ENCODE measurements at regions of chr5 and their contacts with region 1.

Region 1: DNA sequence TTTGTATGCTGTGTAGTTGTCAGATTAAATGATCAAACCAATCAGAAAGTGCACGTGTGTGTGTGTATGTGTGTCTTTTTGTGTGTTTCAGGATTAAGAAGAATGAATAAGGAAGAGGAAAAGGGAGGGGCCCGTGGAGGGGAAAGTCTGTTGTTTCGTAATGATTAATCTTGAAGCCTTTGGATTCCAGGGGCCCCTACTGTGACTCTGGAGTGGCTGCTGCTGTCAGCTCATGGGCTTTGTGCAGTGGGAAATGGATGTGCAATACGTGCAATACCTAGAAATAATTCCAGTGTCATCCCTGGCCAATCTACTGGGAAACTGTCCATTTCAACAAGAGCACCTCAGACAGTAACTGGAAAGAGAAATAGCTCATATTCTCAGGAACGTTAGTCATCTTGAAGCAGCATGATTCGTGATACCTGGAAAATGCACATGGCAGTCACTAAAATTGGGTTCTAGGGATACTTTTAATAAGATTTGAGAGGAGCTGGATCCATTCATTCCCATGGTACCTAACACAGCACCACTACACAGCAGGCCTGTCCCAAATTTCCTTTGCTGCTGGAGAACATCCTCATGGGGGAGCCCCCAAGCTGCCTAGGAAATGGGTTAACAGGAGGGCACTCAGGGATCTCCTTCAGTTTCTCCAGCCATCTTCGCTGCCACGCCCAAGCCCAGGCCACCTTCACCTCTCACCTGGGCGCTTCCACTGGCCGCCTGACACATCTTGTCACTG is 186.3 kb downstream of the NR3C1 start:
- DNase-seq: peak; percentile 53 to 57
- H3K4me3 ChIP-seq: no peak overlapping the region
- H3K4me3 Mint-ChIP-seq: no peak overlapping the region
- H3K27ac Mint-ChIP-seq: peak overlapping the region; percentile 14
- H3K4me1 ChIP-seq: peaks cover 27% of the 10 kb centered on the region
- H3K4me1 Mint-ChIP-seq: peaks cover 19% of the 10 kb centered on the region
- H3K27me3 ChIP-seq: no peaks in the 10 kb centered on the region
- H3K27me3 Mint-ChIP-seq: no peaks in the 10 kb centered on the region
- CTCF ChIP-seq: no peak

Region 2: GRCh38 chr5:142783601-142784341 is 433.5 kb before region 1 on chr5:
- CTCF ChIA-PET with region 1: no interaction called
- POLR2A ChIA-PET with region 1: no interaction called
- intact Hi-C with region 1: no loop called
- DNase-seq: no peak
- H3K4me3 ChIP-seq: no peak overlapping the region
- H3K4me3 Mint-ChIP-seq: no peak overlapping the region
- H3K27ac Mint-ChIP-seq: no peak overlapping the region
- H3K4me1 ChIP-seq: peaks cover 23% of the 10 kb centered on the region
- H3K4me1 Mint-ChIP-seq: peaks cover 40% of the 10 kb centered on the region
- H3K27me3 ChIP-seq: no peaks in the 10 kb centered on the region
- H3K27me3 Mint-ChIP-seq: no peaks in the 10 kb centered on the region
- CTCF ChIP-seq: no peak

Region 3: GRCh38 chr5:143153332-143154119 is 63.7 kb before region 1 on chr5:
- CTCF ChIA-PET with region 1: no interaction called
- POLR2A ChIA-PET with region 1: no interaction called
- intact Hi-C with region 1: no loop called
- DNase-seq: no peak
- H3K4me3 ChIP-seq: no peak overlapping the region
- H3K4me3 Mint-ChIP-seq: no peak overlapping the region
- H3K27ac Mint-ChIP-seq: no peak overlapping the region
- H3K4me1 ChIP-seq: no peaks in the 10 kb centered on the region
- H3K4me1 Mint-ChIP-seq: no peaks in the 10 kb centered on the region
- H3K27me3 ChIP-seq: no peaks in the 10 kb centered on the region
- H3K27me3 Mint-ChIP-seq: no peaks in the 10 kb centered on the region
- CTCF ChIP-seq: no peak

Region 4: GRCh38 chr5:143166661-143167420 is 50.4 kb before region 1 on chr5:
- CTCF ChIA-PET with region 1: no interaction called
- POLR2A ChIA-PET with region 1: no interaction called
- intact Hi-C with region 1: loop called (anchors 2 kb)
- DNase-seq: no peak
- H3K4me3 ChIP-seq: no peak overlapping the region
- H3K4me3 Mint-ChIP-seq: no peak overlapping the region
- H3K27ac Mint-ChIP-seq: peak overlapping the region; percentile 71
- H3K4me1 ChIP-seq: peaks cover 16% of the 10 kb centered on the region
- H3K4me1 Mint-ChIP-seq: peaks cover 18% of the 10 kb centered on the region
- H3K27me3 ChIP-seq: no peaks in the 10 kb centered on the region
- H3K27me3 Mint-ChIP-seq: no peaks in the 10 kb centered on the region
- CTCF ChIP-seq: no peak

Region 5: DNA sequence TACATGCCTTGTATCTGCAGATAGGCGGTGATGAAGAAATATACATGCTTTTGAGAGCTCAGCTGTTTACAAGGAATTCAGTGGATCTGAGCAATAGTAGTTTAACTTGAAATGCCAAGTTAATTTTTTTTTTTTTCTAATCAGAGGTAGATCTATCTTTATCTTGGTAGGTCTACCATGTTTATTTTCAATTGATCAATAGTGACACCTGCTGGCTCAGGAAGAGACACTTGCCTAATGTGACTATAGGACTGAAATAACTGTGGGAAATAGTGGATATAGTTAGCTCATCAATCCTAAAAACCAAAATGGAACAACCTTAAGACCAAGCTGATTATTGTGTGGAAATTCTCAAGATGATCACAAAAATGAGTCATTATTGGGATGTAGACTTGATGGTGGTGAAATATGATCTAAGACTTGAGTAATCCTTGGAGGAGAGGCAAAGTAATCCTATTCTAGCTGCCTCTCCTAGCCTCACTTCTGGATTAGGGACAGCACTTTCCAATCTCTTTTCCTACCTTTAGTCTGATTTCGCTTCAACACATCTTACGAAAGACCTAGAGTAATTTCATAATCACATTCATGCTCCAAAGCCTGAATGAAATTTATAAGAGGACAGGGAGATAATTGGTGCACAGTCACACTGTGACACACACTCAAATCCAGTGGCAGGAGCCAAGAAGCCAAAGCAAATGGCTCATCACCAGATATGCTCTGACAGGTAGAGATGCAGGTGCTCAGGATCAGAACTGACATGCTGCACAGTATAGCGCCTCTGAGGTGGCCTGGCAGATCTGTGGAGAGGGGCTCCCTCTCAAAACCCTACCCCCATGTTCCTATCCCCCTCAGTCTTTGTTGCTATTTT is 751.0 kb after region 1 on chr5:
- CTCF ChIA-PET with region 1: no interaction called
- POLR2A ChIA-PET with region 1: no interaction called
- intact Hi-C with region 1: loop called (anchors 1 kb)
- DNase-seq: peak in 1 of 2 experiments; percentile 46
- H3K4me3 ChIP-seq: no peak overlapping the region
- H3K4me3 Mint-ChIP-seq: no peak overlapping the region
- H3K27ac Mint-ChIP-seq: no peak overlapping the region
- H3K4me1 ChIP-seq: no peaks in the 10 kb centered on the region
- H3K4me1 Mint-ChIP-seq: no peaks in the 10 kb centered on the region
- H3K27me3 ChIP-seq: no peaks in the 10 kb centered on the region; the same call in 1 of the 2 replicates
- H3K27me3 Mint-ChIP-seq: peaks cover 17% of the 10 kb centered on the region
- CTCF ChIP-seq: peak; percentile 10 to 43

Measured in Caco-2 (cell line).